Right cardiac atrium (tissue), 5 donors: ENCODE measurements at regions of chr9 and their contacts with region 1.

Region 1: GRCh38 chr9:14080959-14081542 is 232.9 kb downstream of the NFIB start:
- DNase-seq: no peak
- ATAC-seq: no peak
- H3K4me3 ChIP-seq: no peak overlapping the region
- H3K27ac ChIP-seq: no peak overlapping the region
- H3K4me1 ChIP-seq: peaks cover 2% of the 10 kb centered on the region
- H3K27me3 ChIP-seq: no peaks in the 10 kb centered on the region

Region 2: GRCh38 chr9:14037331-14037730 is 43.7 kb before region 1 on chr9:
- intact Hi-C with region 1: loop called in 1 of 4 experiments (anchors 5 kb)
- DNase-seq: no peak
- ATAC-seq: no peak
- H3K4me3 ChIP-seq: no peak overlapping the region
- H3K27ac ChIP-seq: no peak overlapping the region
- H3K4me1 ChIP-seq: peaks cover 4% of the 10 kb centered on the region
- H3K27me3 ChIP-seq: no peaks in the 10 kb centered on the region

Region 3: GRCh38 chr9:14344053-14344524 is 263.0 kb after region 1 on chr9:
- intact Hi-C with region 1: no loop called
- DNase-seq: peak; percentile 53 to 87 (median 85)
- ATAC-seq: no peak
- H3K4me3 ChIP-seq: peak overlapping the region; percentile 45
- H3K27ac ChIP-seq: peak overlapping the region; percentile 92
- H3K4me1 ChIP-seq: peaks cover 9% of the 10 kb centered on the region
- H3K27me3 ChIP-seq: no peaks in the 10 kb centered on the region